ENCODE measurements at regions of chr10 and their contacts with region 1.

Region 1: DNA sequence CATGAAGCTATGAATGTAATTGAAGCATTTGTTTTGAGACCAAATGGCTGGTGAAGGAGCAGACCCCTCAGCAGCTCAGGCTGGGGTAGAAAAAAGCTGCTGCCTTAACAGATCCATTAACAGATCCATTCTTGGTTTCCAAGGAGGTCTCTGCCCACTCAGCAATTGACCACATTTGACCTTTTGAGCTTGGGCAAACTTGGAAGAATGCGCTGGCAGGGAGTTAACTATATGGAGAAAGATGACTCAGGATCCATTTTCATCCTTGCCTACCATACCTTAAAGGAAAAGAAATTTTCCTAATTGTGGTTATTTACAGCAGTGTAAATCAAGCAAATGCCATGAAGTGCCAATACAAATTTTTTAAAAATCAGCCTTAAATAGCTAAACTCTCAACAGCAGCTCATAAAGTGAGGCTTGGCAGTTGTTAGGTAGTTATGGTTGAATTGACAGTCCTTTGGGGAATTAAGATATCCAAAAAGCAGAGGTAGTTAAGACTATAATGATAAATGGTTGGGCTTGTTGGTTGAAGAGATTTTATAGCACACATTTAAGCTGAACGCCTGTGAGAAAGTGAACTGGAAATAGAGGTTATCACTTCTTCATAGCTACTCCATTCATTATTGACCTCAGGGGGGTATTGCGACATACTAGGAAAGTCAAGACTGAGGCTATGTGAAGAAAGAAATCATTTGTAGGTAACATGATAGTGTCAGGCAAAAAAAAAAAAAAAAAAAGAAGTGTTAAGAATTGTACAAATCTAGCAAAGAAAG is 83.9 kb downstream of the MKX start:
- DNase-seq: no peak
- ATAC-seq: no peak
- H3K4me3 ChIP-seq: no peak overlapping the region
- H3K27ac ChIP-seq: no peak overlapping the region
- H3K4me1 ChIP-seq: no peaks in the 10 kb centered on the region
- H3K27me3 ChIP-seq: no peaks in the 10 kb centered on the region

Region 2: DNA sequence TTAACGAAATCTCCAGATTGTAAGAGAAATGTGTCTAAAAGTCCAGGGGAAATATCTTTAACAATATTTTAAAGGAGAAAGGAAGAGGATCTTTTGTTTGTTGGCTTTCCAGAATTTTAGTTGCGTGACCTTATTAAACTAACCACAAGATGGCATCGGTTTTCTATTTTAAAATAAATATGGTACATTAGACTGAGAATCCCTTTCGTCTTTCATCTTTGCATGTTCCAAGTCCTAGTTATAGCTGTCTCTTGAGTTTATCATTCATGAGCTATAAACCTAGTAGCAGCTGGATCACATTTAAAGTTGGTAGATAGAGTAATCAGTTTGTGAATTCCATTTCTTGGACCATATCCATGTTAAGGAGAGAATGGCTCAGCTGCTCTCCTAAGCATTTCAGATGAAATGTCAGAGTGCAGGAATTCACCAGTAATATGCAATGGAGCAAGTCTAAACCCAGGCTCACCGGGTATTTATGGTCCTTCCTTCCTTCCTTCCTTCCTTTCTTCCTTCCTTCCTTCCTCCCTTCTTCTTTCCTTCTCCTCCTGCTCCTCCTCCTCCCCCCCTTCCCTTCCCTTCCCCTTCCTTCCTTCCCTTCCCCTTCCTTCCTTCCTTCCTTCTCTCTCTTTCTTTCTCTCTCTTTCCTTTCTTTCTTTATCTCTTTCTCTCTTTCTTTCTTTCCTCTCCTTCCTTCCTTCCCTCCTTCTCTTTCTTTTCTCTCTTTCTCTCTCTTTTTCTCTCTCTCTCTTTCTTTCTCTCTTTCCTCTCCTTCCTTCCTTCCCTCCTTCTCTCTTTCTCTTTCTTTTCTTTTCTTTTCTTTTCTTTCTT is 215.4 kb before region 1 on chr10:
- intact Hi-C with region 1: loop called in 2 of 4 experiments (anchors 10 kb)
- DNase-seq: no peak
- ATAC-seq: peak in 1 of 2 donors; percentile 33
- H3K4me3 ChIP-seq: no peak overlapping the region
- H3K27ac ChIP-seq: no peak overlapping the region
- H3K4me1 ChIP-seq: no peaks in the 10 kb centered on the region
- H3K27me3 ChIP-seq: no peaks in the 10 kb centered on the region

Region 3: DNA sequence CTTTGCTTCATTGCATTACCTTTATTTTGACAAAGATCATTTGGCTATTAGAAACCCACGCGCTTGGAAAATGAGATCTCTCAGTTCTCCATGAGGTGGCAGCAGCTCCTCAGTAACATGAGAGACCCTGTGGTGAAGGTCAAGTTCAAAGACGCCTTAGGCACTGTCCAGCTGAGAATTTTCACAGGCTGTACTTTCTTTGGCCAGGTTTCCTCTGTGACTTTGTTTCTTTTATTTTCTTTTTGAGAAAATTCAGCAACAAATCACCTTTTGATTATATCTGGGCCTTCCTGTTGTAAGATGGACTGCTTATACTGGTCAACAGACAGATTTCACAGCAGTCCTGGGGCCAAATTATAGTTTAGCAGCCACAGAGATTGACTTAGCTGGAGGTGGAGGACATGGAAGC is 103.1 kb before region 1 on chr10:
- intact Hi-C with region 1: loop called in 3 of 4 experiments (anchors 2 to 5 kb)
- DNase-seq: peak in 2 of 3 donors; percentile 31 to 49
- ATAC-seq: peak; percentile 80 to 85
- H3K4me3 ChIP-seq: no peak overlapping the region
- H3K27ac ChIP-seq: no peak overlapping the region
- H3K4me1 ChIP-seq: no peaks in the 10 kb centered on the region
- H3K27me3 ChIP-seq: no peaks in the 10 kb centered on the region

Region 4: GRCh38 chr10:27794157-27794556 is 132.5 kb after region 1 on chr10:
- intact Hi-C with region 1: no loop called
- DNase-seq: no peak
- ATAC-seq: no peak
- H3K4me3 ChIP-seq: no peak overlapping the region
- H3K27ac ChIP-seq: no peak overlapping the region
- H3K4me1 ChIP-seq: peaks cover 2% of the 10 kb centered on the region
- H3K27me3 ChIP-seq: peaks cover 3% of the 10 kb centered on the region